ENCODE measurements at regions of chr1 and their contacts with region 1.

Region 1: DNA sequence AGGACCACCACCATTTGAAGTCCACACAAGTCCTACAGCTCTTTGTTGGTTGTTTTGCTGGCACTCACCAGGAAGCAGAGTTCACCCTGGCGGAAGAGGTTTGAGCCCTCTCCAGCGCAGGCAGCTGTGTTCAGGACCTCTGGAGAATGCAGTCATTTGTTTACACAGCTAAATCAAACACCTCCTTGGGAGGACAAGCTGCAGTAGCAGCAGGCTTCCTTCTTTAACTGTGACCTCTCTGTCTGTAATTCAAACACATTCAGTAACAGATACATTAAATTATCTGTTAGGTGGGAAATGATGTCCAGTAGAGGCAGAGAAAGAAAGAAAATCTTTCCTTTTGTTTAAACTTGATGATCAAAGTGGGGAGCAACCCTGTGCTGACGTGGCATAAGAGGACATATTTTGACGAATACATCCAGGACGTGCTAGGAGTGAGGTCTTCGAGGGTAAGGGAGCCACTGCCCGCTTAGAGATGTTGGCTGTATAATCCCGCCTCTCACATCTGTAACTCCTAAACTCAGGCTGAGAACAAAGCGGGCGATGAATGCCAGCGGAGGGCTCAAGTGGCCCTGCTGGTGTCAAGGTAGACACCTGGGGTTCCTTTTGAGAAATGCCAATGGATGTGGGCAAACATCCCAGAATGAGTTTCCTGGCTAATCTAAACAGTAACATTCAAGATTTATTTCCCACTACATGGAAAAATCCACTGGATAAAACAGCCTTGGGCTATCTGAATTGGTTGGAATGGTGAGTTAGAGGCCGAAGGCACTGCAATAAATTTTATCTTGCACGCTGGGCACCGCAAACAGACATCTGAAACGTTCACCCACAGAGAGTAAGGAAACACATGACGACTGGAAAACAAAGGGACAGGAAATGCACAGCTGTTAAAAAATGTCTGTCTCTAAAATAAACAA is 51.7 kb downstream of the ABCA4 start:
- DNase-seq: peak; percentile 36 to 44
- ATAC-seq: peak; percentile 58 to 85 (median 76)
- H3K4me3 ChIP-seq: no peak overlapping the region
- H3K27ac ChIP-seq: peak overlapping the region; percentile 51 to 83 (median 68)
- H3K4me1 ChIP-seq: peaks cover 14 to 74% (median 50%) of the 10 kb centered on the region in 9 donors
- H3K27me3 ChIP-seq: peaks cover 0 to 14% (median 0%) of the 10 kb centered on the region in 7 donors
- CTCF ChIP-seq: no peak

Region 2: DNA sequence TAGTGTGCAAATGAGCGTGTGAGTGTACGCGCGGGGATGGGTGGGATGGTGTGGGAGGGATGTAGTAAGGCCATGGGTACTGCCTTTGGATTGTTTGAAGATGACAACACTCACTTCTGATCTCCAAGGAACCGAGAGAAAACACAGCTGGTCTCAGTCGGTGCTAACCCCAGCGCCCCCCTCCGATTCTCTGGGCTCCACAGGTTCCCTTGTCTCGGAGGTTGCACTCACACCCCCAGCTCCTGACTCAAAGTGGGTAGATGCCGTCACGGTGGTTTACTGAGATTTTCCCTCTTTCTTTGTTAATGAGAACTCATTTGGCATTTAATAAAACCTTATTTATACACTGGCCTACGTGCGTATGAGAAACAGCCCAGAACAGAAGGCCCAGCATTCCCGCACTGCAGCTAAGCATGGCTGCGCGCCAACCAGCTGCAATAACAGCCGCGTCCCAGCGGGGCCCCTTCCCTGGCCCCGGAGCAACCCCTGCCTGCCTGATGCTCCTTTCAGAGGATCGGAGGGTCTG is 25.9 kb after region 1 on chr1:
- intact Hi-C with region 1: loop called in 2 of 10 experiments (anchors 2 to 5 kb)
- DNase-seq: peak; percentile 87 to 90
- ATAC-seq: peak; percentile 77 to 87 (median 84)
- H3K4me3 ChIP-seq: peak overlapping the region in 3 of 10 donors; percentile 5 to 23 (median 8)
- H3K27ac ChIP-seq: peak overlapping the region; percentile 67 to 90 (median 83)
- H3K4me1 ChIP-seq: peaks cover 13 to 92% (median 65%) of the 10 kb centered on the region in 9 donors
- H3K27me3 ChIP-seq: peaks cover 0 to 29% (median 0%) of the 10 kb centered on the region in 7 donors
- CTCF ChIP-seq: peak in 1 of 9 donors; percentile 15

Region 3: DNA sequence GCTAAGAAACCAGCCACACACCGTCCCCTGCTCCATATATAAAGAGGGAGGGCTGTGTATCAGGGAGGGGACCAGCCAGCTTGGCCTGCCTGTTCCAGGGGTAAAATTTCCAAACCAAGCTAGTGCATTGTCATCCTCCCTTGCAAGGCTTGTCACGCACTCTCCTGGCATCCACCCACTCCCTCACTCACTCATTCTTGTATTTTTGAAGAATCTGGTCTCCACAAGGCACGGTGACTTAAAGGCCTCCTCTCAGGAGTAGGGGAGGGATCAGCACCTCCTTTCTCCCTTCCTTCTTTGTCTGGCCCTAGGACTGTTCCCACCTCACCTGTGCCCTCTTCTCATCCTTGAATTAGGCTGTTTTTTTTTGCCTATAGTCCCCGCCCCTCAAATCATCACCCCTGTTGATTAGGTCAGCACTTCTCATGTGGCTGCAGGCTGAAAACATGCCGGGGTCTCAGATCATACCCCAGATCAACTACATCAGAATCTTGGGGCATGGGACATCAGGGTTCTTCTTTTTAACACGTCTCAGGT is 46.7 kb after region 1 on chr1:
- intact Hi-C with region 1: loop called in 1 of 10 experiments (anchors 1 kb)
- DNase-seq: no peak
- ATAC-seq: no peak
- H3K4me3 ChIP-seq: no peak overlapping the region
- H3K27ac ChIP-seq: peak overlapping the region in 4 of 10 donors; percentile 10 to 76 (median 31)
- H3K4me1 ChIP-seq: peaks cover 3 to 37% (median 9%) of the 10 kb centered on the region in 9 donors
- H3K27me3 ChIP-seq: peaks cover 0 to 70% (median 0%) of the 10 kb centered on the region in 7 donors
- CTCF ChIP-seq: no peak

Measured in heart right ventricle (tissue), 16 donors.